Uterus (tissue), 4 donors: ENCODE measurements at regions of chrX and their contacts with region 1.

Region 1: GRCh38 chrX:9464435-9465371 is at the start of gene TBL1X:
- DNase-seq: peak; percentile 41 to 68
- H3K4me3 ChIP-seq: peak within 1 kb of the TSS; percentile 56 to 65
- H3K27ac ChIP-seq: peak within 1 kb of the TSS; percentile 90 to 95
- H3K4me1 ChIP-seq: no peaks in the 10 kb centered on the region
- H3K27me3 ChIP-seq: no peaks in the 10 kb centered on the region
- CTCF ChIP-seq: no peak
- POLR2A ChIP-seq: no peak
- total RNA-seq, gene TBL1X: 15.4 to 121 (median 47.7) TPM

Region 2: DNA sequence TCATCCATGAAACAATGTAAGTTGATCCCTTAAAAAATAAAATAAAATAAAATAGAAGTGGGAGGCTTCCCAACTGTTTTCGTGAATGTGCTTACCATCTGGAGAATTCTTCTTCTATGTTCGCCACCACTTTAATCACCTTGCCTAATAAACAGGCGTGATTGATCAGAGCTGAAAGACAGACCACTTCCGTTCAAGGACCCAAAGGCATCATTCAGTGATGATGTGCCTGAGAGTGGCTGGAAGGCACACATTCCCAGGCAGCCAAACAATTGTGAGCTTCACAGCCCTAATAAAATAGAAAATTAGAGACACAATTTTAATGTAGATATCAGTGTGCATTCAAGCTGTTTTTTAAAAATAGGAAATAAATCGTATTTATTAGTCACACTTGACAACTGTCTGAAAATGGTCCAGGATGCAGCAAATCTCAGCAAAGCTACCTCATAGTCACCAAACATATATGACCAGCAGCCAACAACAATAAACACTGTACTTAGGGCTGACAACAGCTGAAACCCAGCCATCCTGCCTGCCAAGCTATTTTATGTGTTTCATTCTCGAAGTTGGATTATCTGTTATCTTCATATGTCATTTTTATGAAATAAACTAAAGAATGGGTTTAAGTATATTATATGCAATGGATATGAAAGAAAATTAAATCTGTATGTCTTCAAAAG is 267.6 kb before region 1 on chrX:
- intact Hi-C with region 1: no loop called
- DNase-seq: no peak
- H3K4me3 ChIP-seq: no peak overlapping the region
- H3K27ac ChIP-seq: peak overlapping the region; percentile 40 to 52
- H3K4me1 ChIP-seq: no peaks in the 10 kb centered on the region
- H3K27me3 ChIP-seq: no peaks in the 10 kb centered on the region
- CTCF ChIP-seq: no peak
- POLR2A ChIP-seq: no peak

Region 3: GRCh38 chrX:9341291-9342201 is 123.2 kb before region 1 on chrX:
- intact Hi-C with region 1: loop called (anchors 5 kb)
- DNase-seq: peak; percentile 51 to 69
- H3K4me3 ChIP-seq: no peak overlapping the region
- H3K27ac ChIP-seq: peak overlapping the region; percentile 81 to 84
- H3K4me1 ChIP-seq: no peaks in the 10 kb centered on the region
- H3K27me3 ChIP-seq: no peaks in the 10 kb centered on the region
- CTCF ChIP-seq: no peak
- POLR2A ChIP-seq: no peak